Transverse colon (tissue), 4 donors: ENCODE measurements at regions of chr1 and their contacts with region 1.

Region 1: GRCh38 chr1:19559641-19560040 is 74.3 kb upstream of the CAPZB start:
- DNase-seq: no peak
- H3K4me3 ChIP-seq: no peak overlapping the region
- H3K27ac ChIP-seq: no peak overlapping the region
- H3K4me1 ChIP-seq: peaks cover 0 to 17% (median 2%) of the 10 kb centered on the region in 4 donors
- H3K27me3 ChIP-seq: no peaks in the 10 kb centered on the region
- CTCF ChIP-seq: no peak
- EP300 ChIP-seq: no peak
- POLR2A ChIP-seq: no peak

Region 2: GRCh38 chr1:19504796-19505692 is 54.6 kb before region 1 on chr1:
- in situ Hi-C with region 1: no loop called
- intact Hi-C with region 1: loop called (anchors 10 kb)
- DNase-seq: no peak
- H3K4me3 ChIP-seq: no peak overlapping the region
- H3K27ac ChIP-seq: peak overlapping the region; percentile 74 to 84 (median 78)
- H3K4me1 ChIP-seq: peaks cover 8 to 41% (median 19%) of the 10 kb centered on the region in 4 donors
- H3K27me3 ChIP-seq: no peaks in the 10 kb centered on the region
- CTCF ChIP-seq: no peak
- EP300 ChIP-seq: no peak
- POLR2A ChIP-seq: no peak